ENCODE measurements at regions of chr1 and their contacts with region 1.

Region 1: DNA sequence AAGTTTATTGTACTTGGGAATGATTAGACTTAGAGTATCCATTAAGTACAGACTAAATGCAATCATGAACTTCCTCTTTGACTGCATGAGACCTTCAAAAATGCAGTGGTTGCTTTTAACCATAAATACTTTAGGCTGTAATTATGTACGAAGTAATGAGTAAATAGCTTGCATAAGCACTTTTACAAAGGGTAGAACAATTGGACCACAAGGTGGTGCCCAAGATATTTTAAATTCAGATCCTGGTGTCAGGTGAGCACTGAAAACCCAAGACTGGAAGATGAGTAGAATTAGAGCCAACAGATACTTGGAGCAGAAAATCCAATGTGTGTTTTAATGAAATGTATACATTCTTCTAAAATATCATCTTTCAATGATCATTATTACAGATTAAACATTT is 43.4 kb upstream of the RHOU start:
- DNase-seq: peak; percentile 86
- ATAC-seq: peak; percentile 89
- H3K4me3 ChIP-seq: no peak overlapping the region
- H3K27ac ChIP-seq: no peak overlapping the region
- H3K4me1 ChIP-seq: no peaks in the 10 kb centered on the region
- H3K27me3 ChIP-seq: no peaks in the 10 kb centered on the region
- CTCF ChIP-seq: peak; percentile 88

Region 2: GRCh38 chr1:229156872-229157271 is 464.9 kb after region 1 on chr1:
- CTCF ChIA-PET with region 1: no interaction called
- POLR2A ChIA-PET with region 1: no interaction called
- intact Hi-C with region 1: loop called (anchors 2 kb)
- DNase-seq: peak; percentile 49
- ATAC-seq: no peak; the same call in 1 of the 2 replicates
- H3K4me3 ChIP-seq: no peak overlapping the region
- H3K27ac ChIP-seq: no peak overlapping the region
- H3K4me1 ChIP-seq: no peaks in the 10 kb centered on the region
- H3K27me3 ChIP-seq: peaks cover 65% of the 10 kb centered on the region
- CTCF ChIP-seq: peak; percentile 57

Measured in PC-3 (cell line).